ENCODE measurements at regions of chr10 and their contacts with region 1.

Region 1: DNA sequence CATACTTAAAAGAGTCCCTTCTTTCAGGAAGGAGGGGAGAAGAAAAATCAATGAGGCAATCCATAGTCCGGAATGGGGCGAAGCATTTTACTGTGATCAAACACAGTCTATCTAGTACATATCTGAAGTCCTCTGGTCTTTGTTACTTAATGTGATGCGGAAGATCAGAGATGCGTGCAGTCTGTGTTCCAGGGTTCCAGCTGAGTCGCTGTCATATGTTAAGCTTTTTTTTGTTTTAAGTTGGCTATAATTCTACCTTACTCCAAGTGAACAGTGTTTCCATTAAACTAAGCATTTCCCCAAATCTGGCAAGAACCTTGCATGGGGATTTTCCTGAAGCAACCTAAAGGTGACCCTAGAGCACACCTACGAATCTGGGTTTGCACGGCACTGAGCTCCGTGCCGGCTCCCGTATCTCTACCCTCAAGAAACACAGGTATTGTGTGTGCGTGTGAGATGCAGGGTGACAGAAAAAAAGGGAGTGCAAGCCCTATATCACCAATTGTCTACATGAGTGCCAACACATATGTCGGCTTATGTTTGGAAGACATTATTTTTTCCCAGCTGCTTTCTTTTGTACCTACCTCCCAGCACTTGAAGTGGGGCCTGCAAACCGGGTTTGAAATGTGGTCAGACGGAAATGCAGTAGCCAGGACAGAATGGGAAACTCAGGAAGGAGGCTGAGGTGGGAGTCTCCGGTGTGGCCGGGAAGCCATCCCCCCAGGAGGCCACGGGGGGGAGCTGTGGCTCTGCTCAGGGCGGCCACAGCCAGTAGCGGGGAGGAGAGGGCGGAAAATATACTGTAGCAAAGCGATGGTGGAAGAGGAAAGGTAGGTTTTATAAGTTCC is 435.8 kb upstream of the MGMT start:
- DNase-seq: peak; percentile 76
- ATAC-seq: peak; percentile 94

Region 2: GRCh38 chr10:129332476-129332875 is 301.3 kb after region 1 on chr10:
- intact Hi-C with region 1: loop called (anchors 10 kb)
- DNase-seq: no peak
- ATAC-seq: no peak